ENCODE measurements at regions of chr13 and their contacts with region 1.

Region 1: GRCh38 chr13:20566898-20567874 is at the start of gene IFT88:
- DNase-seq: peak; percentile 84 to 85
- H3K4me3 ChIP-seq: peak within 1 kb of the TSS; percentile 66
- H3K27ac ChIP-seq: peak within 1 kb of the TSS; percentile 83
- H3K4me1 ChIP-seq: peaks cover 12% of the 10 kb centered on the region
- H3K27me3 ChIP-seq: no peaks in the 10 kb centered on the region
- CTCF ChIP-seq: no peak
- total RNA-seq, gene IFT88: 11.0 and 11.7 TPM in 2 replicates

Region 2: DNA sequence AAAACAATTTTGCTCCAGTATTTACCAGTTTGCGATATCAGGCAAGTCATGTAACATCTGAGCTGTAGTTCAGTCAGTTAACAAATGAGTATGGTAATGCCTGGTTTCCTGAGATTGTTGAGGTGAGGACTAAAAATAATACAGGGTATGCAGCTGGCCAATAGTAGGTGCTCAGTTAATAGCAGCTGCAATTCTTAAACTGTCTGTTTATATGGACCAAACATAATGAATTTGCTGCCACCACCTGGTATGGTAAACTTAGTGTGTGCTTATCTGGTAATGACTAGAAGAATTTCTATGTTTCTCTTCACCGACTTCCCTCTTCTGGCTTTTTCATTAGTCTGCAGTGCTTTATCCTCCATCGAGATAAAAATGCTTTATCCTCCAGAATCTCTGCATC is 599.6 kb before region 1 on chr13:
- CTCF ChIA-PET with region 1: no interaction called
- POLR2A ChIA-PET with region 1: interaction called, 18 read pairs
- intact Hi-C with region 1: no loop called
- DNase-seq: no peak
- H3K4me3 ChIP-seq: no peak overlapping the region
- H3K27ac ChIP-seq: no peak overlapping the region
- H3K4me1 ChIP-seq: no peaks in the 10 kb centered on the region
- H3K27me3 ChIP-seq: no peaks in the 10 kb centered on the region
- CTCF ChIP-seq: no peak

Region 3: GRCh38 chr13:20412691-20413355 is 154.4 kb before region 1 on chr13:
- CTCF ChIA-PET with region 1: no interaction called
- POLR2A ChIA-PET with region 1: no interaction called
- intact Hi-C with region 1: no loop called
- DNase-seq: no peak
- H3K4me3 ChIP-seq: no peak overlapping the region
- H3K27ac ChIP-seq: no peak overlapping the region
- H3K4me1 ChIP-seq: peaks cover 6% of the 10 kb centered on the region
- H3K27me3 ChIP-seq: no peaks in the 10 kb centered on the region
- CTCF ChIP-seq: no peak

Region 4: DNA sequence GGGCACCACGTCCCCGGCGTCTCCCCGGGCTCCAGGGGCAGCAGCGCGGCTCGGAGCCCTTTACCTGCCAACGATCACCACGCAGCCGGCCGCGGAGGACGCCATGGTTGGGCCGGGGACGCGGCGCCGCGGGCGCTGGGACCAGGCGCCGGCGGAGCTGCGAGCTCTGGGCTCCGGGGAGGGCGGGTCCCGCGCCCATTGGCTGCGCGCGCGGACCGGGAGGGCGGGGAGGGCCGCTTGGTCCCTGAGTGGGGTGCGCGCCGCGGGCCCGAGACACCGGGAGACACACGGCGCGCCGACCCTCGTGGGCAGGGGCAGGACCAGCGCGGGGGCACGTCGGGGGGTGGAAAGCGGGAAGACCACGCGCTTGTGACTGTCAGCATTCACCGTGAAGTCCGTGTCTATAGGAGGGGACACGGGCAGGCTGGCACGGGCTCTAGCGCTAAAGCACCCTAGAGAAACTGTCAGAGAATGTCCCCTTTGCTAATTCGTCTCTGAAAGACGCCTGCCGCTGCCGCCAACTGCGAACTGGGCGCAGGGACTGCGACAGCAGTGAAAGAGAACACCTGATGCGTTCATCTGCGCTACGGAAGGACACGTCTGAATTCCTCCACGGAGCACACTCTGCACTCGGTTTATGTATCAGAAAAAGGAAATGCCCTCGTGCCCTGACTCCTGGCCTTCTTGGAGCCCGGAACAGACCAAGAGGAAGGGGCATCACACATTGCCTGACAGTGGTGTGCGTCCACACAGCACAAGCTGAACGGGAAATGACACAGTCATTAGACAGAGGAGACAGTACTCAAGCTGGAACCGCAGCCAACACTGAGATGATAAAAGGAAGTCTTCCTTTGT is 41.3 kb before region 1 on chr13 and contains the start of gene CRYL1:
- CTCF ChIA-PET with region 1: no interaction called
- POLR2A ChIA-PET with region 1: no interaction called
- intact Hi-C with region 1: loop called (anchors 2 kb)
- DNase-seq: peak; percentile 42 to 49
- H3K4me3 ChIP-seq: peak within 1 kb of the TSS; percentile 71
- H3K27ac ChIP-seq: peak within 1 kb of the TSS; percentile 53
- H3K4me1 ChIP-seq: peaks cover 8% of the 10 kb centered on the region
- H3K27me3 ChIP-seq: no peaks in the 10 kb centered on the region
- CTCF ChIP-seq: no peak
- total RNA-seq, gene CRYL1: 8.4 and 8.7 TPM in 2 replicates

Region 5: DNA sequence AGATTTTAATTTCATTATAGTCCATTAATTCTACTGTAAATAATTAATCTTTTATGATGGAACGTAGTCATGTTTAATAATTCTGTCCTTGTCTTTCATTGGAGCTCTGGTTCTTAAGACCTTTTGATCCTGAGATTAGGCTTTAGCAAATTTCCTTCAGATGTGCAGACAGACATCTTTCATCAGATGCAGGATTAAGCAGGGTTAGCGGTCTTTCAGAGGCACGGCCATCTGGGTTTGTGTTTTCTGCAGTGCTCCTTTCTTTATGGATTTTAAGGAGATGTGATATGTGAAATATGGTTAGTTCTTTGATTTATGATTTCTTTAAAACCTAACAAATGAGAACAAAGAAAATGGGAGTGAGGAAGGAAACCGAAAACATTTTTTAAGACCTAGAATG is 1969.7 kb after region 1 on chr13:
- CTCF ChIA-PET with region 1: no interaction called
- POLR2A ChIA-PET with region 1: no interaction called
- intact Hi-C with region 1: no loop called
- DNase-seq: no peak
- H3K4me3 ChIP-seq: no peak overlapping the region
- H3K27ac ChIP-seq: no peak overlapping the region
- H3K4me1 ChIP-seq: no peaks in the 10 kb centered on the region
- H3K27me3 ChIP-seq: peaks cover 5% of the 10 kb centered on the region; the same call in 1 of the 2 replicates
- CTCF ChIP-seq: no peak